H1 (cell line): ENCODE measurements at regions of chr19 and their contacts with region 1.

Region 1: GRCh38 chr19:31461814-31462539 is 112.7 kb upstream of the TSHZ3 start:
- DNase-seq: no peak
- H3K4me3 ChIP-seq: no peak overlapping the region
- H3K27ac ChIP-seq: no peak overlapping the region
- H3K4me1 ChIP-seq: no peaks in the 10 kb centered on the region
- H3K27me3 ChIP-seq: no peaks in the 10 kb centered on the region
- CTCF ChIP-seq: peak in 2 of 3 experiments; percentile 8 to 38; a peak in 2 of 4 replicates
- EP300 ChIP-seq: no peak
- POLR2A ChIP-seq: no peak
- RAD21 ChIP-seq: peak; percentile 24 to 45; a peak in 2 of 4 replicates

Region 2: GRCh38 chr19:31448221-31448657 is 13.7 kb before region 1 on chr19:
- CTCF ChIA-PET with region 1: interaction called, 14 read pairs
- POLR2A ChIA-PET with region 1: no interaction called
- DNase-seq: no peak
- H3K4me3 ChIP-seq: no peak overlapping the region
- H3K27ac ChIP-seq: no peak overlapping the region
- H3K4me1 ChIP-seq: no peaks in the 10 kb centered on the region; a peak in 1 of 7 replicates
- H3K27me3 ChIP-seq: no peaks in the 10 kb centered on the region
- CTCF ChIP-seq: no peak
- EP300 ChIP-seq: no peak
- POLR2A ChIP-seq: no peak
- RAD21 ChIP-seq: no peak

Region 3: GRCh38 chr19:31600731-31601295 is 138.8 kb after region 1 on chr19:
- CTCF ChIA-PET with region 1: no interaction called
- POLR2A ChIA-PET with region 1: no interaction called
- DNase-seq: no peak
- H3K4me3 ChIP-seq: no peak overlapping the region
- H3K27ac ChIP-seq: no peak overlapping the region
- H3K4me1 ChIP-seq: no peaks in the 10 kb centered on the region
- H3K27me3 ChIP-seq: no peaks in the 10 kb centered on the region
- CTCF ChIP-seq: no peak
- EP300 ChIP-seq: no peak
- POLR2A ChIP-seq: no peak
- RAD21 ChIP-seq: peak in 1 of 2 experiments; percentile 3; a peak in 1 of 4 replicates